ENCODE measurements at regions of chr2 and their contacts with region 1.

Region 1: DNA sequence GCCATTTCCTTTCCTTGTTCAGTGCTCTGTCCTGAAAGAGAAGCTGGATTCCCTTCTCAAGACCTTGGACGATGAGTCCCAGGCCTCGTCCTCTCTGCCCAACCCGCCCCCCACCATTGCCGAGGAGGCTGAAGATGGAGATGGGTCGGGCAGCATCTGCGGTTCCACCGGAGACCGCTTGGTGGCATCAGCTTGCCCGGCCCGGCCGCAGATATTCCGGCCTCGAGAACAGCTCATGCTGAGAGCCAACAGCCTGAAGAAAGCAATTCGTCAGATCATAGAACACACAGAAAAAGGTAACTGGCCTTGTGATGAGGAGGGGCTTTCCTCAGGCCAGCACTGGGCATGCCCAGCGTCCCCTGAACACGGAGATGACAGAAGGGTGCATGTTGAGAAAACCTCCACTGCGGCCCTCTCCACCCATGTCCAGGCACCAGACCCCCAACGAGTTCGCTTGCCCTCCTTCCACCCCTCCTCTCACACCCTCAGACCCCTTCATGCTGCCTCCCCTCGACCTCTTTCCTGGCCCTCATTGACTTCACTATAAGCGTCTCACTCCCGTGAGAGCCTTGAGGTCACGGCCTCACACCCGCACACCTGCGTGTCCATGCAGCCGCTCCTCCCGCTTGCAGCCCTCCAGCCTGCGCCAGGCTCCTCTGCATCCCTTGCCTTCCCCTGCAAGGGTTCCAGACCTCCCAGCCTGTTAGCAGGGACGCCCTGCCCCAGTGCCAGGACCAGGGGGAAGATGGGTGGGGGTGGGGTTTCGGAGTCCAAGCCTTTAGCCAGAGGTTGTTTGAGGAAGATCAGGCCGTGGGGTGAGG is 95.0 kb downstream of the DGKD start:
- DNase-seq: no peak
- H3K4me3 ChIP-seq: no peak overlapping the region
- H3K27ac ChIP-seq: no peak overlapping the region
- H3K4me1 ChIP-seq: no peaks in the 10 kb centered on the region
- H3K27me3 ChIP-seq: no peaks in the 10 kb centered on the region
- CTCF ChIP-seq: peak; percentile 25

Region 2: DNA sequence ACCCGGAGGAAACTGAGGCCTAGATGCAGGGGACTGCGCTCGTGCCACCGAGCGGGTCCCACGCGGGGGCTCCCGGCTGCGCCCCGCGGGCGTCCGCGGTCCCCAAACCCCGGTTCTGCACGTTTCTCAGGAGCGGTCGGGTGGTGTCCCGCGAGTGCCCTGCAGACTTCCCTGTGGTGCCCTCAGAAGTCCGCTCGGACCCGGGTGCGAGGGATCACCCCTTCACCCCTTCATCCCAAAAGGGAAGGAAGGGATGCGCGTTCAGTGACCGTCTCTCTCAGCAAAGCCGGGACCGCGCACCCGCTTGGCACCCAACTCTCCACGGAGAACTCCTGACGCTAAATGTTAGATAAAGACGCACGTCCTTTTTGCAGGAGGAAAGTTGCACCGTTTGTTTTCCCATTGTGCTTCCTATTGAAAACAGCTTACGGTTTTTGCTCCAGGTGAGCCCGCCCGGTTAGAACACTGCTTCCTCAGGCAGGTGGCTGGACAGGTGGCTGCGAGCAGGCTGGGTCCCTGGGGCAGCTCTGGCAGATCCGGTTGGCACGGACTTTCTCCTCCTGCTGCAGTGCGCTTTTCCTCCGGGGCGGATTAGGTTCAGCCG is 94.2 kb before region 1 on chr2:
- intact Hi-C with region 1: loop called (anchors 5 kb)
- DNase-seq: peak; percentile 58
- H3K4me3 ChIP-seq: peak overlapping the region; percentile 57
- H3K27ac ChIP-seq: no peak overlapping the region
- H3K4me1 ChIP-seq: peaks cover 14% of the 10 kb centered on the region
- H3K27me3 ChIP-seq: no peaks in the 10 kb centered on the region
- CTCF ChIP-seq: no peak

Region 3: GRCh38 chr2:233831011-233831721 is 381.9 kb after region 1 on chr2:
- intact Hi-C with region 1: loop called (anchors 2 kb)
- DNase-seq: no peak
- H3K4me3 ChIP-seq: no peak overlapping the region
- H3K27ac ChIP-seq: no peak overlapping the region
- H3K4me1 ChIP-seq: no peaks in the 10 kb centered on the region
- H3K27me3 ChIP-seq: no peaks in the 10 kb centered on the region
- CTCF ChIP-seq: no peak